IMR-90 (cell line): ENCODE measurements at regions of chr9 and their contacts with region 1.

Region 1: DNA sequence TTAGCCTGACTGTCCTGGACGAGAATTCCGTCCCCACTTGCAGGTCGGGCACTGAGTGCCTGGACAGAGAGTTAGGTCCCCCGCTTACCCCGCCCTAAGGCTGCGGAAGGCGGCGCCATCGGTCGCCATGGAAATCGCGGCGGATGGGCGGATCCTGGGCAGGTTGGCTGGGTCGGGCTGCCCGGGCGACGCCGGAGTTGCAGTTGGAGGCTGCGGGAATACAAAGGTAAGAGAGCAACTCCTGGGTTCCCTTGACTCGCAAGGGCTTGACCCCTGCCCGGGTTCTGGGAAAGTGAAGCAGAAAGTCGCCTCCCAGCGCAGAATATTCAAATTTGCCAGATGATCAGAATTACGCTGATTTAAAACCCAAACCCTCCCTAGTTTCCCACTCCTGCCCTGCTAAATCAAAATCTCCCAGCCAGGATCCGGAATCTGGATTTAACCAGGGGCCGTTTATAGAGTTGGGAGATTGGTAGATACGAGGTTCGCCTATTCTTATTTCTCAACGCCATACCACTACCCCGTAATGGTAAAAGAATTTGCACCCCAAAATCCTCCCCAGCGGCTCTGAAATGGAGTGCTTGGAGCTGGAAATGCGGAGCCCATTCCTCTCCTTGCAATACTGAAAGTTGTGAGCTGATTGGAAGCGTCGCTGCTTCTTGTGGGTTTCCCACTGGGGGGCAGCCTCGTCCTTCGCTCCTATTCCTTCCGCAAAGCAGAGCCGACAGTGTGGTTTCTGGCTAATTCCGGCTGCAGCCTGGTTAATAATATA is 156.4 kb upstream of the RASEF start:
- DNase-seq: peak; percentile 46
- ATAC-seq: peak; percentile 93
- H3K4me3 ChIP-seq: peak overlapping the region; percentile 54
- H3K27ac ChIP-seq: no peak overlapping the region
- H3K4me1 ChIP-seq: no peaks in the 10 kb centered on the region
- H3K27me3 ChIP-seq: no peaks in the 10 kb centered on the region
- CTCF ChIP-seq: peak; percentile 54
- POLR2A ChIP-seq: no peak
- RAD21 ChIP-seq: peak; percentile 52

Region 2: DNA sequence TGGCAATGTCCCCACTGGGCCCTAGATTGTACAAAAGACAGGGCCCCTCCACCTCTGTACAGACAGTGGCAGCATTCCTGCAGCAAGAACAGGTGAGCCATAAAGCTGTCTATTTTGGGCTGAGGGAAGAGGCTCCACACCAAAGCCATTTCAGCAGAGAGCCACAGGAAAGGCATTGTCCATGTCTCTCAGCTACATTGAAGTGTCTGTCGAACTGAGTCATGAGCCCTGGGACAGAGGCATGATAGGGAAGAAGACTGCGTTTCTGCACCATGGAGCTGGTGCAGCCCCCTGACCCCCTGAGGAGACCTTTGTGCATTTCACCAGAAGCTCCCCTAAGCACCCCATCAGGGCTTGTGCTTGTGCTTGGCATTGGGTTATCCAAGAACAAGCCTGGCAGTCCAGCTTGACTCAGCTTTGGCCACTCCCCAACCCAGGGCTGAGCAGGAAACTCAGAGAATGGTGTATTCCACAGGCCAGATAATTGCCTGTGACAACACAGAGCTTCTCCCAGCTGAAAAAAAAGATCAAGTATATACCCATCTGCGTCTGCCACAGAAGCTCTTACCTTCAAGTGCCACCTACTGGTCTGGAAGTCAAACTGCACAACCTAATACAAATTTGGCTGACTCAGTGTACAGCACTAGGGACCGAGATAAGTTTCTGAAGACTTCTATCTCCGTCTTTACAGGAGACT is 324.8 kb after region 1 on chr9:
- CTCF ChIA-PET with region 1: interaction called, 5 read pairs
- POLR2A ChIA-PET with region 1: no interaction called
- dilution Hi-C with region 1: no loop called
- in situ Hi-C with region 1: no loop called
- intact Hi-C with region 1: loop called (anchors 2 kb)
- DNase-seq: peak; percentile 38
- ATAC-seq: peak; percentile 85
- H3K4me3 ChIP-seq: no peak overlapping the region
- H3K27ac ChIP-seq: no peak overlapping the region
- H3K4me1 ChIP-seq: no peaks in the 10 kb centered on the region
- H3K27me3 ChIP-seq: 0 out of 2 replicates have a peak, but pooled peaks cover under 1% of the 10 kb centered on the region
- CTCF ChIP-seq: peak; percentile 46
- POLR2A ChIP-seq: no peak
- RAD21 ChIP-seq: peak; percentile 50

Region 3: DNA sequence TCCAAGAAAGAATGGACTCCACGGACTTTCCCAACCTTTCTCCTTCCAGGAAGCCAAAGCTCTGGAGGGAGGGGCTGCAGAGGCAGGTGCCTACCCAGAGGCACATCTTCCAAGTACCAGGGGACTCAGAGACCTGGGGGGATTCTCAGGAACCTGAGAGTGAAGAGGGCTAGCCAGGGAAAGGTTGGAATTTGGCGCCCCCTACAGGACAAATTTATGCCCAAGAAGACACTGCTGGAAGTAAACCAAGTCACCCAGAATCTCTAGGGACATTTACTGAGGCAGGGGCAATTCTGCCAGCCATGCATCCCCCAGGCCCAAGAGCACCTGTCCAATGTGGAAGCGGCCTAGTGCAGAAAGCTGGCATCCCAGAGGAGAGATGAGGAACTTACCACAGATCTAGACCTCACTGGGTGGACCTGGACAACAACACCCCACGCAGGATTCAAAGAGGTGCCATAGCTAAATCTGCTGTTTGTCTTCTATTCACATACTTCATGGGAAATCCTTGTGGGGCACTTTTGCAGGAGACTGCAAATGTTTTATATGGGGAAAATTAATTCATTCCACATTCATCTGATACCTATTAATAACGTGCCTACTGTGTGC is 377.7 kb after region 1 on chr9:
- CTCF ChIA-PET with region 1: interaction called, 4 read pairs
- POLR2A ChIA-PET with region 1: no interaction called
- dilution Hi-C with region 1: no loop called
- in situ Hi-C with region 1: no loop called
- intact Hi-C with region 1: loop called (anchors 5 kb)
- DNase-seq: no peak
- ATAC-seq: no peak
- H3K4me3 ChIP-seq: no peak overlapping the region
- H3K27ac ChIP-seq: no peak overlapping the region
- H3K4me1 ChIP-seq: no peaks in the 10 kb centered on the region
- H3K27me3 ChIP-seq: no peaks in the 10 kb centered on the region
- CTCF ChIP-seq: peak; percentile 38; the same call in 1 of the 2 replicates
- POLR2A ChIP-seq: no peak
- RAD21 ChIP-seq: peak; percentile 27; the same call in 1 of the 2 replicates

Region 4: GRCh38 chr9:83649080-83649479 is 429.7 kb after region 1 on chr9:
- CTCF ChIA-PET with region 1: no interaction called
- POLR2A ChIA-PET with region 1: no interaction called
- dilution Hi-C with region 1: no loop called
- in situ Hi-C with region 1: no loop called
- intact Hi-C with region 1: loop called (anchors 5 kb)
- DNase-seq: peak; percentile 28
- ATAC-seq: peak; percentile 88
- H3K4me3 ChIP-seq: no peak overlapping the region
- H3K27ac ChIP-seq: no peak overlapping the region
- H3K4me1 ChIP-seq: no peaks in the 10 kb centered on the region
- H3K27me3 ChIP-seq: no peaks in the 10 kb centered on the region
- CTCF ChIP-seq: peak; percentile 71
- POLR2A ChIP-seq: no peak
- RAD21 ChIP-seq: peak; percentile 64